ENCODE measurements at regions of chr15 and their contacts with region 1.

Region 1: DNA sequence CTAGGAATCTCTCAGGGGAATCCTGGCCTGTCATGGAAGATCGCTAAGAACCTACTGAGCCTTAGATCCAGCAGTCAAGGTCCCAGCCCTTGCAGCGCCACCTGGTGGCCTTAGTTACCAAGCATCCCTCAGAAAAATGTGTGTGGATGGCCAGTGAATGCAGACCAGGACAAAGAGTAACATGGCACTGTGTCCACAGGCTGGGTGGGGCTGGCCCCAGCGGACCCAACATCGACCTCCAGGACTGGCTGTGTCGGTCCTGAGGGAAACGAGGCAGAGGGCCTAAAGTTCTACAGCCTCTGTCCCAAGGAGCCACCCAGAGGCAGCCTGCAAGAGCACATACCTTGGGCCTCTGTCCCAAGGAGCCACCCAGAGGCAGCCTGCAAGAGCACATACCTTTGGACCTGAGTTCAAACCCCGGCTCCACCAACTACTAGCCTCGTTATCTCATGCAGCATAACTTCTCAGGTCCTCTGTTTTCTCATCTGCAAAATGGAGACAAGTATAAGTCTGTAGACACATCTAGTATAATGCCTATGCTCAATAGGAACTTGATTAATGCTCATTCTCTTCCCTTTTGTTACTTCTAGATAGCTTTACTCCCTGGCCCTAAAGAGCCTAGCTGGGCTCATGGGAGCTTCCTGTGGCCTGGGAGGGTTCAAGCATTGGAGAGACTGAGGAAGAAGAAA is 57.5 kb upstream of the HERC1 start:
- DNase-seq: peak; percentile 88
- ATAC-seq: peak; percentile 53
- H3K4me3 Mint-ChIP-seq: no peak overlapping the region
- H3K27ac Mint-ChIP-seq: no peak overlapping the region
- H3K4me1 Mint-ChIP-seq: peaks cover 56% of the 10 kb centered on the region
- H3K27me3 Mint-ChIP-seq: no peaks in the 10 kb centered on the region

Region 2: DNA sequence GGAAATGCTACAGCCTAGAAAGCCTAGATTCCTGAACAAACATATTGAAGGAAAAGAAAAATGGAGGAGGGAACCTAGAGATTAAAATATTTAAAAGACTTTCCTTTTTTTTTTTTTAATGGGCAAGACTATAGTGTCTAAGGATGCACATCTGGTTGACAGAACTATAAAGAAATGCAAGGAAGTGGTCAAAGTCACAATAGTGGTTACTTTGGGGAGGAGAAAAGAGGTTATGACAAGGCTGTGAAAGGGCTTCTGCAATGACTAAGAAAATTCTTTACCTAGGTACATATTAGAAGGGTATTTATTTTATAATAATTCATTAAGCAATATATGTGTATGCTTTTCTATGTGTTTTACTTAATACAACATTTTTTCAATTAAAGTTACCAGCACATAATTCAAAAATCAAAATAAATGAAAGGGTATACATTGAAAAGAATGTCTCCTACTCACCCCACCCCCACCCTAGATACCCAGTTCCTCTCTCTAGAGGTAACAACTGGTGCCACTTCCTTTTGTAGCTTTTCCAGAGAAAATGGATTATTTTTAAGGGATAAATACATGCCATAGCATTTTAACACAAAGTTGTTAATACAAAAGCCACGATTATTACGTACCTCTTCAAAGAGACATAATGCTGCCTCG is 127.6 kb before region 1 on chr15:
- CTCF ChIA-PET with region 1: interaction called, 5 read pairs
- POLR2A ChIA-PET with region 1: no interaction called
- intact Hi-C with region 1: loop called in 1 of 2 experiments (anchors 2 kb)
- DNase-seq: no peak
- ATAC-seq: peak; percentile 76
- H3K4me3 Mint-ChIP-seq: no peak overlapping the region
- H3K27ac Mint-ChIP-seq: peak overlapping the region; percentile 76
- H3K4me1 Mint-ChIP-seq: peaks cover 51% of the 10 kb centered on the region
- H3K27me3 Mint-ChIP-seq: no peaks in the 10 kb centered on the region

Region 3: DNA sequence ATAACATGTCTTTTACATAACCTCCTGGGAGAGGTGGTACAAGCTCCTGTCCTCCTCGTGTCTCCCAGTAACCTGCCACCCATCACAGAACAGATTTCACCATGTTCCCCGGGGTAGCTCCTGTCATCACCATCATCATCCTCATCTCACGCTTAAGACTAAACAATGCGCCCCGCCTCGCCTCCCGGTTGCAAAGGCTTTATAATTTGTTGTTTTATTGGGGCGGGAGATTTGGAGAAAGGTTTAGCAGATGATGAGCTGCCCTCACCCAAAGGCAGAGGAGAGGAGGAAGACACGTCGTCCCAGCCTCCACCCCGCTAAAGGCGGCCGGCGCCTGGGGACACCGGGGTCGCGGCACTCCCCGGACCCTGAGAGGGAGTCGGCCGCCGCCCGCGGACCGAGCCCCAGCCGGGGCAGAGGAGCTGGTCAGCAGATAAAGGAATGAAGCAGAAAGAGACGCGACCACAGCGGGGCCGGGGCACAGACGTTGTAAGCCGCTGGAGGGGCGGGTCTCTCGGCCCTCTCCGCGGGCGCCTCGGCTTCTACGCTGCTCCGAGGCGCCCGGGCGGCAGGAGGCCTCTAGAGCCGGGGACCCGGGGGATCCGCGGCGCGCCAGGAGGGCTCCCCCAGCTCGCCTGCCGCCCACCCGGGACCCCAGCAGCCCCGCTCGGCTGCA is 58.1 kb before region 1 on chr15:
- CTCF ChIA-PET with region 1: interaction called, 4 read pairs
- POLR2A ChIA-PET with region 1: interaction called, 3 read pairs
- intact Hi-C with region 1: loop called (anchors 2 kb)
- DNase-seq: peak; percentile 64
- ATAC-seq: peak; percentile 50
- H3K4me3 Mint-ChIP-seq: peak overlapping the region; percentile 87
- H3K27ac Mint-ChIP-seq: peak overlapping the region; percentile 91
- H3K4me1 Mint-ChIP-seq: peaks cover 50% of the 10 kb centered on the region
- H3K27me3 Mint-ChIP-seq: no peaks in the 10 kb centered on the region

Region 4: DNA sequence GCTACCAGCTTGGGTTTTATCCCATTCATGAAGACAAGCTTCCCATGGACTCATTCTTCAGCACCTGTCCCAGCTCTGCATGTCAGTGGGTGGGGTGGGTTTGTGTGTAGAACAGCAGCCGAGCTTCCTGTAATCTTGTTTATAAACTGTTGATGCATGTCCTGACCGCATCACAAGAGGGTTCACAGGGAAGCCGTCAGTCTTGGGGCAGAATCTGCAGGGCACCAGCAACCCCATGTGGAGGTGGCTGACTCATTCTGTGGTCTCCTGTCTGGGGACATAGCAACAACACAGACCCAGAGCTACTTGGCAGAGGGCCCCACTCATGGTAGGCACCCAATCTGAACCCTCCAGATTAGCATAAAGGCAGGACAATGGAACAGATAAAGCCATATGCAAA is 119.5 kb after region 1 on chr15:
- CTCF ChIA-PET with region 1: no interaction called
- POLR2A ChIA-PET with region 1: no interaction called
- intact Hi-C with region 1: loop called (anchors 1 to 5 kb)
- DNase-seq: peak; percentile 90
- ATAC-seq: peak; percentile 78
- H3K4me3 Mint-ChIP-seq: peak overlapping the region; percentile 31
- H3K27ac Mint-ChIP-seq: peak overlapping the region; percentile 87
- H3K4me1 Mint-ChIP-seq: peaks cover 45% of the 10 kb centered on the region
- H3K27me3 Mint-ChIP-seq: no peaks in the 10 kb centered on the region

Region 5: GRCh38 chr15:64067564-64068030 is 176.4 kb after region 1 on chr15:
- CTCF ChIA-PET with region 1: interaction called, 11 read pairs
- POLR2A ChIA-PET with region 1: no interaction called
- intact Hi-C with region 1: loop called (anchors 2 to 5 kb)
- DNase-seq: peak; percentile 78
- ATAC-seq: peak; percentile 86
- H3K4me3 Mint-ChIP-seq: no peak overlapping the region
- H3K27ac Mint-ChIP-seq: no peak overlapping the region
- H3K4me1 Mint-ChIP-seq: peaks cover 6% of the 10 kb centered on the region
- H3K27me3 Mint-ChIP-seq: no peaks in the 10 kb centered on the region

Measured in activated CD4-positive, alpha-beta T cell treated with anti-CD3 and anti-CD28 coated beads for 36 hours (primary cell).